H1 (cell line): ENCODE measurements at regions of chr3 and their contacts with region 1.

Region 1: DNA sequence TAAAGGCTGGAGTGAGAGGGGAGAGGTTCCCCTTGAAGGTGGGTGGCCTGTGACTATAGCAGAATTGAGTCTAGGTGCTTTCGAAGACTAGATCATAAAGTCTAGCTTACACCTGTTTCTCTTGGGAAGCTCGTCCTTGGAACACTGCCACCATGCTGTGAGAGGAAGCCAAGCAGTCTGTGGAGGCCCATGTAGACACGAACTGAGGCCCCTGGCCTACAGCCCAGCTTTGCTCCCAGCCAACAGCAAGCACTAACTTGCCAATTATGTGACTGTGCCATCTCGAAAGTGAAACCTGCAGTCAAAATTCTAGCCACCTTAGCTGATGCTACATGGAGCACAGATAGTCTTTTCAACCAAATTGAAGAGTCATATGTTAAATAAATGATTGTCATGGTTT is 190.5 kb upstream of the NECTIN3 start:
- DNase-seq: no peak
- H3K4me3 ChIP-seq: no peak overlapping the region
- H3K27ac ChIP-seq: no peak overlapping the region
- H3K4me1 ChIP-seq: no peaks in the 10 kb centered on the region
- H3K27me3 ChIP-seq: no peaks in the 10 kb centered on the region
- CTCF ChIP-seq: peak; percentile 28 to 68 (median 55); a peak in 3 of 4 replicates
- EP300 ChIP-seq: no peak
- POLR2A ChIP-seq: no peak
- RAD21 ChIP-seq: peak; percentile 49 to 63

Region 2: DNA sequence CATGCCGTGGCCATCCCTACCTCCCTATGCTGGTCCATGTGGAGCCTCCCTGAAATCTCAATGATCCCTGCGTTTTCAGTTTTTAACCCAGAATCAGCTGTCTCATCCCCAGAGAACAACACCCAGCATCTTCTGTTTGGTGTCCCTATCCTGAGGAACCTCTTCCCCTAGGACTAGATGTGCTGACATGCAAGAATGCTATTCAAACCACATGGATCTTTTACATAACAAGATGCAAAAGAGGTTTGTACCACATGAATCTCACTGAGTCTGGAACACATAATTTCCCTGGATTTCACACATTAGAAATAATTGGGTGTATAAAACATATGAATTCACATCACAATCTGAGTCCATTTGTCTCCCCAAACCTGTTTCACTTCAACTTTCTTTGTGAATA is 16.0 kb after region 1 on chr3:
- CTCF ChIA-PET with region 1: interaction called, 10 read pairs
- POLR2A ChIA-PET with region 1: interaction called, 4 read pairs
- DNase-seq: no peak
- H3K4me3 ChIP-seq: no peak overlapping the region
- H3K27ac ChIP-seq: no peak overlapping the region
- H3K4me1 ChIP-seq: no peaks in the 10 kb centered on the region
- H3K27me3 ChIP-seq: no peaks in the 10 kb centered on the region
- CTCF ChIP-seq: no peak
- EP300 ChIP-seq: no peak
- POLR2A ChIP-seq: no peak
- RAD21 ChIP-seq: no peak

Region 3: GRCh38 chr3:110910346-110910955 is 29.4 kb after region 1 on chr3:
- CTCF ChIA-PET with region 1: no interaction called
- POLR2A ChIA-PET with region 1: no interaction called
- DNase-seq: no peak
- H3K4me3 ChIP-seq: no peak overlapping the region
- H3K27ac ChIP-seq: no peak overlapping the region
- H3K4me1 ChIP-seq: peaks cover 0 to 4% (median 1%) of the 10 kb centered on the region in 4 experiments; a peak in 2 of 7 replicates
- H3K27me3 ChIP-seq: no peaks in the 10 kb centered on the region
- CTCF ChIP-seq: no peak
- EP300 ChIP-seq: no peak
- POLR2A ChIP-seq: no peak
- RAD21 ChIP-seq: no peak